Transverse colon (tissue), 4 donors: ENCODE measurements at regions of chr15 and their contacts with region 1.

Region 1: DNA sequence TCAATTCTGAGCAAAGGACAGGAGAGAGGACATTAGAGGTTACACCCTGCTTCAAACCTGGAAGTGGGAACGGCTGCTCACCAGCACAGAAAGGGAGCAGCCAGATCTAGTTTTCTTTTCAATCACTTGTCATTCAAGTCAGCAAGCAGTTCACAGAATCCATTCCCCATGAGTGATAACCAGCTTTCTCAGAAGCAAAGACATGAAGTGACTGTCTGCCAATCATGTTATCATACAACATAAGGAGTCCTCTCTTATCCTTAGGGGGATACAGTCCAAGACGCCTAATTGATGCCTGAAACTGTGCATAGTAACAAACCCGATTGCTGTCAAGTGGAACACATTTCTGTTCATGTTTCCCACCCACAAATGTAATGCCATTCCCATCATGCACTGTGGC is 54.7 kb downstream of the FAM98B start:
- DNase-seq: no peak
- H3K4me3 ChIP-seq: no peak overlapping the region
- H3K27ac ChIP-seq: no peak overlapping the region
- H3K4me1 ChIP-seq: no peaks in the 10 kb centered on the region
- H3K27me3 ChIP-seq: no peaks in the 10 kb centered on the region
- CTCF ChIP-seq: no peak
- EP300 ChIP-seq: no peak
- POLR2A ChIP-seq: no peak

Region 2: GRCh38 chr15:38168467-38169070 is 340.1 kb before region 1 on chr15:
- in situ Hi-C with region 1: no loop called
- intact Hi-C with region 1: no loop called
- DNase-seq: no peak
- H3K4me3 ChIP-seq: no peak overlapping the region
- H3K27ac ChIP-seq: no peak overlapping the region
- H3K4me1 ChIP-seq: peaks cover 0 to 17% (median 2%) of the 10 kb centered on the region in 4 donors
- H3K27me3 ChIP-seq: no peaks in the 10 kb centered on the region
- CTCF ChIP-seq: no peak
- EP300 ChIP-seq: no peak
- POLR2A ChIP-seq: no peak

Region 3: GRCh38 chr15:38389924-38390542 is 118.6 kb before region 1 on chr15:
- in situ Hi-C with region 1: no loop called
- intact Hi-C with region 1: no loop called
- DNase-seq: peak; percentile 77
- H3K4me3 ChIP-seq: no peak overlapping the region
- H3K27ac ChIP-seq: no peak overlapping the region
- H3K4me1 ChIP-seq: no peaks in the 10 kb centered on the region
- H3K27me3 ChIP-seq: no peaks in the 10 kb centered on the region
- CTCF ChIP-seq: peak; percentile 66 to 84 (median 76)
- EP300 ChIP-seq: no peak
- POLR2A ChIP-seq: no peak

Region 4: DNA sequence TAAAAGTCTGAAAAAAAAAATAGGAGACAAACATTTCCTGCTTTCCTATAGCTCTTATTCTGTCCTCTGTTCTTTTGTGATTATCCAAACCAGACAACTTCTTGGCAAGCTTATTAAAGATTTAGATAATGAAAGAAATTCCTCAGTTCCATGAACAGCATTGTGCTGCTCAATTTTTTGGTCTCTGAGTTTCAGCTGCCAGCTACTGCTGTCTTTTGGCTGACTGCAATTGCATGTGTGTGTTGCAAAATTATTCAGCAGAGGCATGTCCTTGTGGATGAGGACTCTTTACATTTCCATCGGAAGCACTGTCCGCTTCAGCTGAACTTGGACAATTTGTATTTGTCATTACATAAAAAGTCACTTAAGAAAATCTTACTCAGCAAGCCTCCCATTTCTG is 453.3 kb after region 1 on chr15:
- in situ Hi-C with region 1: no loop called
- intact Hi-C with region 1: loop called (anchors 5 kb)
- DNase-seq: no peak
- H3K4me3 ChIP-seq: no peak overlapping the region
- H3K27ac ChIP-seq: no peak overlapping the region
- H3K4me1 ChIP-seq: peaks cover 0 to 2% (median 0%) of the 10 kb centered on the region in 4 donors
- H3K27me3 ChIP-seq: no peaks in the 10 kb centered on the region
- CTCF ChIP-seq: no peak
- EP300 ChIP-seq: no peak
- POLR2A ChIP-seq: no peak